ENCODE measurements at regions of chr5 and their contacts with region 1.

Region 1: GRCh38 chr5:67003935-67004729 is 192.5 kb downstream of the CD180 start:
- DNase-seq: peak; percentile 93 to 96
- H3K4me3 ChIP-seq: peak overlapping the region; percentile 51
- H3K4me3 Mint-ChIP-seq: peak overlapping the region; percentile 97
- H3K27ac Mint-ChIP-seq: peak overlapping the region; percentile 95
- H3K4me1 ChIP-seq: peaks cover 45% of the 10 kb centered on the region
- H3K4me1 Mint-ChIP-seq: peaks cover 41% of the 10 kb centered on the region
- H3K27me3 ChIP-seq: no peaks in the 10 kb centered on the region
- H3K27me3 Mint-ChIP-seq: no peaks in the 10 kb centered on the region
- CTCF ChIP-seq: no peak

Region 2: DNA sequence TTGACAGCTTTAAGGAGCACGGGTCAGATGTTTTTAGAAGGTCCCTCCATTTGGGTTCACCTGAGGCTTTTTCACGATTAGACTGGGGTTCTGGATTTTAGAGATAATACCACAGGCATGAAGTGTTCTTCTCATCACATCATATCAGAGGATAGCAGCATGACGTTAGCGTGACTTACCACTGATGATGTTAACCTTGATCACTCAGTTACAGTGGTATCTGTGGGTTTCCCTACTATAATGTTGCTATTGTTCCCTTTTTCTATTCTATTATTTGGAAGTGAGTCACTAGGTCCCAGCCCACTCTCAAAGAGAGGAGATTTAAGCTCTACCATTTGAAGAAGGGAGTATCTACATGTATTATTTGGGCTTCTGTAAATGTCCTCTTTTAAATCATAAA is 108.0 kb before region 1 on chr5:
- CTCF ChIA-PET with region 1: no interaction called
- POLR2A ChIA-PET with region 1: no interaction called
- intact Hi-C with region 1: no loop called
- DNase-seq: no peak
- H3K4me3 ChIP-seq: no peak overlapping the region
- H3K4me3 Mint-ChIP-seq: no peak overlapping the region
- H3K27ac Mint-ChIP-seq: no peak overlapping the region
- H3K4me1 ChIP-seq: no peaks in the 10 kb centered on the region; the same call in 1 of the 2 replicates
- H3K4me1 Mint-ChIP-seq: peaks cover 12% of the 10 kb centered on the region
- H3K27me3 ChIP-seq: peaks cover 2% of the 10 kb centered on the region; the same call in 1 of the 2 replicates
- H3K27me3 Mint-ChIP-seq: peaks cover 2% of the 10 kb centered on the region
- CTCF ChIP-seq: no peak

Region 3: GRCh38 chr5:67015541-67016191 is 11.5 kb after region 1 on chr5:
- CTCF ChIA-PET with region 1: interaction called, 3 read pairs
- POLR2A ChIA-PET with region 1: interaction called, 3 read pairs
- intact Hi-C with region 1: loop called (anchors 1 kb)
- DNase-seq: peak in 1 of 2 experiments; percentile 56
- H3K4me3 ChIP-seq: peak overlapping the region; percentile 8; the same call in 1 of the 2 replicates
- H3K4me3 Mint-ChIP-seq: peak overlapping the region; percentile 57
- H3K27ac Mint-ChIP-seq: peak overlapping the region; percentile 84
- H3K4me1 ChIP-seq: peaks cover 78% of the 10 kb centered on the region
- H3K4me1 Mint-ChIP-seq: peaks cover 57% of the 10 kb centered on the region
- H3K27me3 ChIP-seq: no peaks in the 10 kb centered on the region
- H3K27me3 Mint-ChIP-seq: no peaks in the 10 kb centered on the region
- CTCF ChIP-seq: no peak

Region 4: GRCh38 chr5:67033880-67034651 is 29.9 kb after region 1 on chr5:
- CTCF ChIA-PET with region 1: no interaction called
- POLR2A ChIA-PET with region 1: interaction called, 4 read pairs
- intact Hi-C with region 1: loop called (anchors 1 kb)
- DNase-seq: peak; percentile 64 to 65
- H3K4me3 ChIP-seq: no peak overlapping the region
- H3K4me3 Mint-ChIP-seq: peak overlapping the region; percentile 27
- H3K27ac Mint-ChIP-seq: peak overlapping the region; percentile 86
- H3K4me1 ChIP-seq: peaks cover 65% of the 10 kb centered on the region
- H3K4me1 Mint-ChIP-seq: peaks cover 43% of the 10 kb centered on the region
- H3K27me3 ChIP-seq: no peaks in the 10 kb centered on the region
- H3K27me3 Mint-ChIP-seq: no peaks in the 10 kb centered on the region
- CTCF ChIP-seq: no peak

Region 5: DNA sequence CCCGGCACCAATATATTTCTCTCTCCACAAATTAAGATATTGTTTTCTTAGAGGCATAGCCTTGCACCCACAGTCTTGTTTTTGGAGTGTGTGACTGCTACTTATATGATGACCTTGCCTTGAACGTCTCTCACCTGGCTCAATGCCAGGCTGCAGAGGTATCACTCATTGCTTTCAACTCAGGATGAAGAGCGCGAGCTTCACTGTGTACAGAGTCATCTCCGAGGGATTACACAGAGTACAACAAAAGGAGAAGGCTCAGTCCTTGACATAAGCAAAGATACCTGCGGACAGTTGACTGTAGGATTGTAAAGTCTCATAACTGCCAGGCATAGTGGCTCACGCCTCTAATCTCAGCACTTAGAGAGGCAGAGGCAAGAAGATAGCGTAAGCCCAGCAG is 138.7 kb after region 1 on chr5:
- CTCF ChIA-PET with region 1: interaction called, 3 read pairs
- POLR2A ChIA-PET with region 1: no interaction called
- intact Hi-C with region 1: loop called (anchors 5 kb)
- DNase-seq: no peak
- H3K4me3 ChIP-seq: no peak overlapping the region
- H3K4me3 Mint-ChIP-seq: no peak overlapping the region
- H3K27ac Mint-ChIP-seq: no peak overlapping the region
- H3K4me1 ChIP-seq: peaks cover 18% of the 10 kb centered on the region
- H3K4me1 Mint-ChIP-seq: peaks cover 14% of the 10 kb centered on the region
- H3K27me3 ChIP-seq: no peaks in the 10 kb centered on the region
- H3K27me3 Mint-ChIP-seq: no peaks in the 10 kb centered on the region
- CTCF ChIP-seq: no peak

Measured in Caco-2 (cell line).